Ovary (tissue), 10 donors: ENCODE measurements at regions of chr2 and their contacts with region 1.

Region 1: DNA sequence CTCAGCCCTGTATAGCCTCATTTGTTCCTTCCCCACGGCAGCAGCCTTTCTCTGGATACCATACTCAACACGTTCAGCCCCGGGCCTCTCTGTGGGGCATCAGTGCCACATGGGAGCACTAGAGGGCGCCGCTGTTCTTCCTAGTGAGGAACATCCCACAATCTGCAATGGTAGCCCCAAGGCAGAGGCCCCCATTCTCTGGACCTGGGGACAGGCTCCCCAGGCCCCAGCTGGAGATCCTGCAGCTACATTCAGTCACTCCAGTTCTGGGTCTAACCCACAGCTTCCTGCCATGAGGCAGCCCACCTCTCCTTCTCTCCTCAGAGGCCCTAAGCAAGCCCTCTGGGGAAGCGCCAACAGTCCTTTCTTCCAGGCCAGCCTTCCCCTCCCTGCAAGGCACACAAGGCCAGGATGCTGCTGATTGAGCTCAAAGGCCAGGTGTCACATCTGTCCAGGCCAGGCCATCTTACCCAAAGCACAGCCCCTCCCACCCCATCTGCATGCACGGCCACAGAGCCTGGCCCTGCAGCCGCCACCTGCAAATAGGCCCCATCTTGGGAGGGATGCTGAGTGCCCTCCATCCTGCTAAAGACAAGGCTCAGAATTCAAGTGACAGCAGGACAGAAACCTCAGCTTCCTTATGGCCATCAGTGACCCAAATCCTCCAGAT is 14.3 kb upstream of the SFXN5 start:
- DNase-seq: peak; percentile 67 to 87 (median 82)
- H3K4me3 ChIP-seq: no peak overlapping the region
- H3K27ac ChIP-seq: no peak overlapping the region
- H3K4me1 ChIP-seq: no peaks in the 10 kb centered on the region
- H3K27me3 ChIP-seq: no peaks in the 10 kb centered on the region
- CTCF ChIP-seq: peak; percentile 56 to 64 (median 58)
- EP300 ChIP-seq: no peak
- POLR2A ChIP-seq: no peak

Region 2: DNA sequence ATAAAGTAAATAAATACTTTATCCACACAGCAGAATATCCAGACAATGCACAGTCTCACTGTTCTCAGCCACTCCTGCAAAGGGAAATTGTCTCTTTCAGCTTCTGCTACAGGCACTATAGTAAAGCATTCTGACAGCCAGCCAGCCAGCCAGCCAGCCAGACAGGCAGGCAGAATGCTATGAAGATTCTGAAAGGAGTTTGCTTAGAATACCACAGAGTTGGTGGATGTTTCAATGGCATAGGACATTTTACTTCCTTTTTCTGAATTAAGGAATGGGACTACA is 822.1 kb before region 1 on chr2:
- intact Hi-C with region 1: no loop called
- DNase-seq: no peak
- H3K4me3 ChIP-seq: no peak overlapping the region
- H3K27ac ChIP-seq: no peak overlapping the region
- H3K4me1 ChIP-seq: peaks cover 6% of the 10 kb centered on the region
- H3K27me3 ChIP-seq: no peaks in the 10 kb centered on the region
- CTCF ChIP-seq: no peak
- EP300 ChIP-seq: no peak
- POLR2A ChIP-seq: no peak

Region 3: GRCh38 chr2:72887754-72888437 is 197.9 kb before region 1 on chr2:
- intact Hi-C with region 1: loop called in 1 of 4 experiments (anchors 10 kb)
- DNase-seq: peak; percentile 87 to 93 (median 90)
- H3K4me3 ChIP-seq: peak overlapping the region; percentile 47
- H3K27ac ChIP-seq: peak overlapping the region; percentile 74 to 79
- H3K4me1 ChIP-seq: peaks cover 7% of the 10 kb centered on the region
- H3K27me3 ChIP-seq: no peaks in the 10 kb centered on the region
- CTCF ChIP-seq: peak; percentile 68 to 80 (median 78)
- EP300 ChIP-seq: no peak
- POLR2A ChIP-seq: no peak

Region 4: DNA sequence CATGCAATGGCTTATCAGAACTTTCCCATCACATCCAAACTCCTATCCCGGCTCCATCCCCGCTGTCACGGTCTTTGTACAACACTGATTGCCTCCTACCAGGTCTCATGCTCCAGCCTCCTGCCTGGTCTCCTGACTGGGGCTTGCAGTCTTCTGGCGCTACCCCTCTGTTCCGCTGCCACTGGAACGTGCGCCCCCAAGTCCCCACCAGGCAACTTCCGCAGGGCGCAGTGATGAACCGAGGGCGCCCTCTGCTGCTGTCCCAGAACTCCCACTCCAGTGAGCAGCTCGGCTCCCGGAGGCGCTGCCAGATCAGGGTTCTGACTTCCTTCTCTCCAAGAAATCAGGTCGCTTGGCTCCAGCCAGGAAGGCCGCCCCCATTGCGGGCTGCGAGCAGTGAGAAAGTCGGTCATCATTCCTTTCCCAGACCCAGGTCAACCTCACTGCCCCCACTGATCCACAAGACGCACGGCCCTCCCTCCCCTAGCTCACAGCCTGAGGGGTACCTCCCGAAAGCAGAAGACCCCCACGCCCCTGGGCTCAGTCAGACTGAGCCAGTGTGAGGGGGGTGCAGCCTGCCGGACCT is 70.8 kb after region 1 on chr2:
- intact Hi-C with region 1: loop called (anchors 2 to 10 kb)
- DNase-seq: peak in 4 of 5 donors; percentile 32 to 67 (median 50)
- H3K4me3 ChIP-seq: no peak overlapping the region
- H3K27ac ChIP-seq: no peak overlapping the region
- H3K4me1 ChIP-seq: no peaks in the 10 kb centered on the region
- H3K27me3 ChIP-seq: no peaks in the 10 kb centered on the region
- CTCF ChIP-seq: no peak
- EP300 ChIP-seq: no peak
- POLR2A ChIP-seq: no peak

Region 5: GRCh38 chr2:73163483-73164367 is 77.9 kb after region 1 on chr2:
- intact Hi-C with region 1: loop called in 3 of 4 experiments (anchors 5 to 10 kb)
- DNase-seq: peak; percentile 49 to 79 (median 74)
- H3K4me3 ChIP-seq: no peak overlapping the region
- H3K27ac ChIP-seq: no peak overlapping the region
- H3K4me1 ChIP-seq: no peaks in the 10 kb centered on the region
- H3K27me3 ChIP-seq: no peaks in the 10 kb centered on the region
- CTCF ChIP-seq: peak; percentile 61 to 73 (median 62)
- EP300 ChIP-seq: no peak
- POLR2A ChIP-seq: no peak